CD8-positive, alpha-beta T cell (primary cell): ENCODE measurements at regions of chr2 and their contacts with region 1.

Region 1: GRCh38 chr2:136327162-136327852 is 209.4 kb upstream of the CXCR4 start:
- DNase-seq: peak; percentile 61 to 96 (median 82)
- ATAC-seq: peak; percentile 93
- H3K4me3 ChIP-seq: peak overlapping the region; percentile 24 to 26
- H3K4me3 Mint-ChIP-seq: peak overlapping the region; percentile 72
- H3K27ac ChIP-seq: peak overlapping the region; percentile 59 to 83
- H3K27ac Mint-ChIP-seq: peak overlapping the region; percentile 94
- H3K4me1 ChIP-seq: peaks cover 43% of the 10 kb centered on the region
- H3K4me1 Mint-ChIP-seq: peaks cover 62% of the 10 kb centered on the region
- H3K27me3 ChIP-seq: no peaks in the 10 kb centered on the region
- H3K27me3 Mint-ChIP-seq: no peaks in the 10 kb centered on the region
- CTCF ChIP-seq: no peak

Region 2: DNA sequence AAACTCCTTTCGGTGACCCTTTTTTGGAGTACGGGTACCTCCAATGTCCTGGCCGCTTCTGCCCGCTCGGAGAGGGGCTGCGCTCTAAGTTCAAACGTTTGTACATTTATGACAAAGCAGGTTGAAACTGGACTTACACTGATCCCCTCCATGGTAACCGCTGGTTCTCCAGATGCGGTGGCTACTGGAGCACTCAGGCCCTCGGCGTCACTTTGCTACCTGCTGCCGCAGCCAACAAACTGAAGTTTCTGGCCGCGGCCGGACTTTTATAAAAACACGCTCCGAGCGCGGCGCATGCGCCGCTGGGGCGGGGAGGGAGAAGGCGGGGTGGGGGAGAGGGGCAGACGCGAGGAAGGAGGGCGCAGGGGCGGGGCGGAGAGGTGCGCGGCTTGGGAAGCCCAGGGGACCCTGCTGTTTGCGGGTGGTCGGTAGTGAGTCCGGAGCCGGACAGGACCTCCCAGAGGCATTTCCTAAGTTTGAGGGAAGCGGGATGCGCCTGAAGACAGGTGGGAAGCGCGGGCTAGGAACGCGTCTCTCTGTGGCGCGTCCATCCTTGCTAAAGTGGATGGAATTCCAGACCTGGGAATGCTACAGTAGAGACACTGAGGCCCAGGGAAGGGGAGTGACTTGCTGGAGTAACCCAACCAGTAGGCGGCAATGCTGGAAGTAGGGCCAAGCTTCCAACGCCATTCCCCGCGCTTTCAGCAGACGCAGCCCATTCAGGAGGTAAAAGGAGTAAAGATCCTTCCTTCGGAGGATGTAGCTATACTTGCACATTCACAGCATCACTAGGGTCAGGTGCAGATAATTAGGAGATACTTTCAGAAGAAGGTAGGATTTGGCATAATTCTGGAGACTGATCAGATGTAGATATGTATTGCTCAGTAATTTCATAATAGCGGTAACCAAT is 209.1 kb before region 1 on chr2 and contains the start of gene CXCR4:
- CTCF ChIA-PET with region 1: no interaction called
- POLR2A ChIA-PET with region 1: interaction called, 10 read pairs
- intact Hi-C with region 1: loop called (anchors 1 to 2 kb)
- DNase-seq: peak; percentile 92 to 99 (median 94)
- ATAC-seq: peak; percentile 35
- H3K4me3 ChIP-seq: peak within 1 kb of the TSS; percentile 77 to 83
- H3K4me3 Mint-ChIP-seq: peak within 1 kb of the TSS; percentile 97
- H3K27ac ChIP-seq: peak within 1 kb of the TSS; percentile 87 to 100
- H3K27ac Mint-ChIP-seq: peak within 1 kb of the TSS; percentile 100
- H3K4me1 ChIP-seq: peaks cover 60% of the 10 kb centered on the region
- H3K4me1 Mint-ChIP-seq: peaks cover 64% of the 10 kb centered on the region
- H3K27me3 ChIP-seq: no peaks in the 10 kb centered on the region
- H3K27me3 Mint-ChIP-seq: no peaks in the 10 kb centered on the region
- CTCF ChIP-seq: no peak
- total RNA-seq, gene CXCR4: 2,159 to 2,188 TPM

Region 3: GRCh38 chr2:136281281-136282114 is 45.8 kb before region 1 on chr2:
- CTCF ChIA-PET with region 1: no interaction called
- POLR2A ChIA-PET with region 1: no interaction called
- intact Hi-C with region 1: loop called (anchors 2 to 5 kb)
- DNase-seq: peak; percentile 22 to 94 (median 63)
- ATAC-seq: peak; percentile 83
- H3K4me3 ChIP-seq: no peak overlapping the region
- H3K4me3 Mint-ChIP-seq: peak overlapping the region; percentile 33
- H3K27ac ChIP-seq: peak overlapping the region; percentile 48 to 80
- H3K27ac Mint-ChIP-seq: peak overlapping the region; percentile 96
- H3K4me1 ChIP-seq: peaks cover 31% of the 10 kb centered on the region
- H3K4me1 Mint-ChIP-seq: peaks cover 40% of the 10 kb centered on the region
- H3K27me3 ChIP-seq: no peaks in the 10 kb centered on the region
- H3K27me3 Mint-ChIP-seq: no peaks in the 10 kb centered on the region
- CTCF ChIP-seq: no peak

Region 4: GRCh38 chr2:136297994-136298393 is 29.3 kb before region 1 on chr2:
- CTCF ChIA-PET with region 1: no interaction called
- POLR2A ChIA-PET with region 1: no interaction called
- intact Hi-C with region 1: no loop called
- DNase-seq: peak in 1 of 9 experiments; percentile 4
- ATAC-seq: no peak
- H3K4me3 ChIP-seq: no peak overlapping the region
- H3K4me3 Mint-ChIP-seq: no peak overlapping the region
- H3K27ac ChIP-seq: no peak overlapping the region
- H3K27ac Mint-ChIP-seq: no peak overlapping the region
- H3K4me1 ChIP-seq: peaks cover 5% of the 10 kb centered on the region
- H3K4me1 Mint-ChIP-seq: peaks cover 4% of the 10 kb centered on the region
- H3K27me3 ChIP-seq: no peaks in the 10 kb centered on the region
- H3K27me3 Mint-ChIP-seq: no peaks in the 10 kb centered on the region
- CTCF ChIP-seq: no peak

Region 5: GRCh38 chr2:136378712-136379595 is 51.6 kb after region 1 on chr2:
- CTCF ChIA-PET with region 1: interaction called, 6 read pairs
- POLR2A ChIA-PET with region 1: interaction called, 4 read pairs
- intact Hi-C with region 1: loop called (anchors 1 kb)
- DNase-seq: peak; percentile 57 to 88 (median 81)
- ATAC-seq: peak; percentile 40
- H3K4me3 ChIP-seq: no peak overlapping the region
- H3K4me3 Mint-ChIP-seq: no peak overlapping the region
- H3K27ac ChIP-seq: no peak overlapping the region
- H3K27ac Mint-ChIP-seq: peak overlapping the region; percentile 72
- H3K4me1 ChIP-seq: peaks cover 46% of the 10 kb centered on the region
- H3K4me1 Mint-ChIP-seq: peaks cover 71% of the 10 kb centered on the region
- H3K27me3 ChIP-seq: no peaks in the 10 kb centered on the region
- H3K27me3 Mint-ChIP-seq: no peaks in the 10 kb centered on the region
- CTCF ChIP-seq: peak; percentile 86

Region 6: GRCh38 chr2:136538489-136538888 is 211.2 kb after region 1 on chr2:
- CTCF ChIA-PET with region 1: no interaction called
- POLR2A ChIA-PET with region 1: no interaction called
- intact Hi-C with region 1: no loop called
- DNase-seq: no peak
- ATAC-seq: no peak
- H3K4me3 ChIP-seq: no peak overlapping the region
- H3K4me3 Mint-ChIP-seq: no peak overlapping the region
- H3K27ac ChIP-seq: no peak overlapping the region
- H3K27ac Mint-ChIP-seq: no peak overlapping the region
- H3K4me1 ChIP-seq: no peaks in the 10 kb centered on the region
- H3K4me1 Mint-ChIP-seq: no peaks in the 10 kb centered on the region
- H3K27me3 ChIP-seq: no peaks in the 10 kb centered on the region
- H3K27me3 Mint-ChIP-seq: peaks cover 15% of the 10 kb centered on the region
- CTCF ChIP-seq: no peak